ENCODE measurements at regions of chr1 and their contacts with region 1.

Region 1: DNA sequence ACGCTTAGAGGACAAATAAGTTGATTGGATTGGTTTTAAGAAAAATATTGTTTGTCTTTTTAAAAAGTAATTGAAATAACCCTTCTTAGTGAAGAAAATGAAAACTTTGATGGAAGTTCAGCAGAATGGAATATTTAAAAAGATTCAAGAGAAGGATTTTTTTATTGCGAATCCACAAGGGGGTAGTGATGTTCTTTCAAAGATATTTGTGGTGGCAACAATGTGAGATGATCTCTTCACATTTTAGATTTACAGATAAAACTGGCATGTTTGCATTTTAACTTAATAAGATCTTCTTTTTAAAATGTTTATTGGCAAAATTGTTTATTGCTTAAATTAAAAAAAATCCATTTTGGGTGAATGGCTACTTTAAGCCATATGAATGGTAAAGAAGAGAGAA is 8.9 kb downstream of the CAMTA1 start:
- DNase-seq: peak in 6 of 9 donors; percentile 5 to 53 (median 42)
- ATAC-seq: no peak
- H3K4me3 ChIP-seq: no peak overlapping the region
- H3K4me3 Mint-ChIP-seq: no peak overlapping the region
- H3K27ac ChIP-seq: no peak overlapping the region
- H3K27ac Mint-ChIP-seq: no peak overlapping the region
- H3K4me1 ChIP-seq: peaks cover 0 to 4% of the 10 kb centered on the region in 2 donors
- H3K4me1 Mint-ChIP-seq: peaks cover 13 to 62% (median 56%) of the 10 kb centered on the region in 7 donors
- H3K27me3 ChIP-seq: no peaks in the 10 kb centered on the region
- H3K27me3 Mint-ChIP-seq: no peaks in the 10 kb centered on the region

Region 2: GRCh38 chr1:6727535-6727934 is 66.6 kb before region 1 on chr1:
- CTCF ChIA-PET with region 1: no interaction called
- POLR2A ChIA-PET with region 1: no interaction called
- intact Hi-C with region 1: no loop called
- DNase-seq: peak in 7 of 9 donors; percentile 36 to 60 (median 51)
- ATAC-seq: peak; percentile 74
- H3K4me3 ChIP-seq: no peak overlapping the region
- H3K4me3 Mint-ChIP-seq: no peak overlapping the region
- H3K27ac ChIP-seq: no peak overlapping the region
- H3K27ac Mint-ChIP-seq: peak overlapping the region in 1 of 9 donors; percentile 25
- H3K4me1 ChIP-seq: no peaks in the 10 kb centered on the region
- H3K4me1 Mint-ChIP-seq: no peaks in the 10 kb centered on the region
- H3K27me3 ChIP-seq: no peaks in the 10 kb centered on the region
- H3K27me3 Mint-ChIP-seq: peaks cover 6 to 10% (median 6%) of the 10 kb centered on the region in 5 donors

Region 3: DNA sequence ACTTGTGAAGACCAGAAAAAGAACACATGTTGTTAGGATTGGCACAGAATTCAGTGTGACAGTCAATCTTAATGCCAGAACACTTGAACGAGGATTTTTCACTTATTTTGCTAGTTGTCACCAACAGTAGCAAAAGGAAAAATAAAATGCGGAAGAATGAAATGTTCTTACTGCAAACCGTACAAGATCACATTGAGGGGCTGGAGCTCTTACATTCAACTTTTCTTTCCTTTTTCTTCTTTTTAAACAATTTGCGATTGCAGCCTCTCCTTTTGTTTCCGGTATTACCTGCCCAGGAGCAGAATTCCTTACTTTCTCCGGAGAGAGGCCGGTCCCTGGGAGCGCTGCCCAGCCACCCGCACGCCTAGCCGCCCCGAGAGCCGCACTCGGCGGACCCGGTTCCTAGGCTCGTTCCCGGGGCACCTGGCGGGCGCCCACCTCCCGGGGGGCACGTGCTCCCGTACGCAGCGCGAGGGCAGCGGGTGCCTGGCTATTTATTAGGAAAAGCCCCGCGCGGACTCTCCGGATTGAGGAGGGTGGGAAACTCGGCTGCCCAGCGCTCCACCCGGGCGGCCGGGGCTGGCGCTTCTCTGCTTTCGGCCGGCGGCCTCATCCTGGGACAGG is 10.1 kb before region 1 on chr1:
- CTCF ChIA-PET with region 1: no interaction called
- POLR2A ChIA-PET with region 1: no interaction called
- intact Hi-C with region 1: no loop called
- DNase-seq: peak in 2 of 9 donors; percentile 1 to 30
- ATAC-seq: no peak
- H3K4me3 ChIP-seq: peak overlapping the region; percentile 79
- H3K4me3 Mint-ChIP-seq: peak overlapping the region; percentile 84 to 95 (median 88)
- H3K27ac ChIP-seq: peak overlapping the region; percentile 94
- H3K27ac Mint-ChIP-seq: peak overlapping the region; percentile 80 to 94 (median 90)
- H3K4me1 ChIP-seq: peaks cover 21 to 25% of the 10 kb centered on the region in 2 donors
- H3K4me1 Mint-ChIP-seq: peaks cover 23 to 39% (median 38%) of the 10 kb centered on the region in 7 donors
- H3K27me3 ChIP-seq: no peaks in the 10 kb centered on the region
- H3K27me3 Mint-ChIP-seq: peaks cover 0 to 3% (median 0%) of the 10 kb centered on the region in 5 donors

Region 4: GRCh38 chr1:7070389-7071029 is 276.3 kb after region 1 on chr1:
- CTCF ChIA-PET with region 1: interaction called, 4 read pairs
- POLR2A ChIA-PET with region 1: no interaction called
- intact Hi-C with region 1: loop called in 1 of 2 experiments (anchors 1 kb)
- DNase-seq: peak in 7 of 9 donors; percentile 26 to 53 (median 45)
- ATAC-seq: peak; percentile 65
- H3K4me3 ChIP-seq: no peak overlapping the region
- H3K4me3 Mint-ChIP-seq: peak overlapping the region in 7 of 10 donors; percentile 30 to 60 (median 41)
- H3K27ac ChIP-seq: no peak overlapping the region
- H3K27ac Mint-ChIP-seq: no peak overlapping the region
- H3K4me1 ChIP-seq: no peaks in the 10 kb centered on the region
- H3K4me1 Mint-ChIP-seq: peaks cover 0 to 4% (median 0%) of the 10 kb centered on the region in 7 donors
- H3K27me3 ChIP-seq: no peaks in the 10 kb centered on the region
- H3K27me3 Mint-ChIP-seq: peaks cover 9 to 32% (median 25%) of the 10 kb centered on the region in 5 donors

Measured in naive thymus-derived CD4-positive, alpha-beta T cell (primary cell).